CD4-positive, alpha-beta T cell (primary cell): ENCODE measurements at regions of chr22 and their contacts with region 1.

Region 1: GRCh38 chr22:50209893-50210292 is 9.1 kb downstream of the SELENOO start:
- DNase-seq: peak; percentile 59 to 88 (median 68)
- ATAC-seq: peak; percentile 82
- H3K4me3 ChIP-seq: no peak overlapping the region
- H3K4me3 Mint-ChIP-seq: peak overlapping the region; percentile 11
- H3K27ac ChIP-seq: no peak overlapping the region
- H3K27ac Mint-ChIP-seq: peak overlapping the region; percentile 78
- H3K4me1 ChIP-seq: peaks cover 20% of the 10 kb centered on the region
- H3K4me1 Mint-ChIP-seq: peaks cover 26% of the 10 kb centered on the region
- H3K27me3 ChIP-seq: no peaks in the 10 kb centered on the region
- H3K27me3 Mint-ChIP-seq: no peaks in the 10 kb centered on the region
- CTCF ChIP-seq: peak; percentile 70

Region 2: DNA sequence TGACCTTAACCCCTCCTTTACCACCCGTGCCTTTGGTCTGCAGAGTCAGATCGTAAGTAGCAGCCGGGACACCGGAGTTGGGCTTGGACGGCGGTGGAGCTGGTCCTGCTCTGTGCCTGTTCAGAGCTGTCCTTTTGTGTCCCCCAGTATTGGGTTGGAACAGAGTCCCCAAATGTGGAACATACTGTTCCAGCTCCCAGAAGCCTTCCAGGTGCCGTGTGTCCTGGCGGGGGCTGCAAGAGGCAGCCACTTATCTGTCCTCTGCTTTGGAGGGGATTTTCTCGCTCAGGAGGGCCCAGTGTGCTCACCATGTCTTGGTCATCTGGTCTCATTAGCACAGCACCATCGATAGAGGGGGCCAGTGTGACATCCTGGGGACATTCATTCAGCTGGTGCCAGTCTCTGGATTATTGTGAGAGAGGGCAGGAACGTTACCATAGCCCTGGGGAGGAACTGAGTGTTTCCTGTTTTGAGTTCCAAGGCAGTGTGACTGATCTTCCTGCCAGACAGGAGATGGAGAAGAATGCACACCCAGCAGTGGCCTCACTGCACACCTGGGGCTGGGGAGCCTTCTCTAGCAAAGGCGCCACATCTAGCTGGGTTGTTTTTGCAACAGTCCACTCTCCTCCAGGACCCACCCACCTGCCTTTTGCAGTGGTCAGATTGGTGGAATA is 279.0 kb before region 1 on chr22:
- CTCF ChIA-PET with region 1: no interaction called
- POLR2A ChIA-PET with region 1: no interaction called
- intact Hi-C with region 1: loop called in 1 of 2 experiments (anchors 5 kb)
- DNase-seq: peak in 12 of 14 experiments; percentile 22 to 83 (median 48)
- ATAC-seq: peak; percentile 37
- H3K4me3 ChIP-seq: no peak overlapping the region
- H3K4me3 Mint-ChIP-seq: peak overlapping the region; percentile 73
- H3K27ac ChIP-seq: peak overlapping the region in 1 of 2 donors; percentile 39
- H3K27ac Mint-ChIP-seq: peak overlapping the region; percentile 89
- H3K4me1 ChIP-seq: peaks cover 60% of the 10 kb centered on the region
- H3K4me1 Mint-ChIP-seq: peaks cover 42% of the 10 kb centered on the region
- H3K27me3 ChIP-seq: no peaks in the 10 kb centered on the region
- H3K27me3 Mint-ChIP-seq: no peaks in the 10 kb centered on the region
- CTCF ChIP-seq: peak; percentile 59

Region 3: GRCh38 chr22:49979587-49980264 is 230.2 kb before region 1 on chr22:
- CTCF ChIA-PET with region 1: no interaction called
- POLR2A ChIA-PET with region 1: no interaction called
- intact Hi-C with region 1: loop called in 1 of 2 experiments (anchors 5 kb)
- DNase-seq: peak in 4 of 14 experiments; percentile 33 to 68 (median 54)
- ATAC-seq: no peak
- H3K4me3 ChIP-seq: no peak overlapping the region
- H3K4me3 Mint-ChIP-seq: no peak overlapping the region
- H3K27ac ChIP-seq: no peak overlapping the region
- H3K27ac Mint-ChIP-seq: no peak overlapping the region
- H3K4me1 ChIP-seq: peaks cover 32% of the 10 kb centered on the region
- H3K4me1 Mint-ChIP-seq: peaks cover 29% of the 10 kb centered on the region
- H3K27me3 ChIP-seq: peaks cover 13 to 15% of the 10 kb centered on the region in 2 experiments
- H3K27me3 Mint-ChIP-seq: peaks cover 21% of the 10 kb centered on the region
- CTCF ChIP-seq: peak; percentile 44

Region 4: GRCh38 chr22:50169774-50170341 is 40.0 kb before region 1 on chr22:
- CTCF ChIA-PET with region 1: no interaction called
- POLR2A ChIA-PET with region 1: no interaction called
- intact Hi-C with region 1: loop called in 1 of 2 experiments (anchors 5 kb)
- DNase-seq: peak in 5 of 14 experiments; percentile 30 to 55 (median 43)
- ATAC-seq: peak; percentile 68
- H3K4me3 ChIP-seq: no peak overlapping the region
- H3K4me3 Mint-ChIP-seq: no peak overlapping the region
- H3K27ac ChIP-seq: no peak overlapping the region
- H3K27ac Mint-ChIP-seq: no peak overlapping the region
- H3K4me1 ChIP-seq: peaks cover 12% of the 10 kb centered on the region
- H3K4me1 Mint-ChIP-seq: peaks cover 10% of the 10 kb centered on the region
- H3K27me3 ChIP-seq: peaks cover 29 to 39% of the 10 kb centered on the region in 2 experiments
- H3K27me3 Mint-ChIP-seq: peaks cover 45% of the 10 kb centered on the region
- CTCF ChIP-seq: no peak

Region 5: GRCh38 chr22:50582562-50583293 is 372.8 kb after region 1 on chr22 and contains the start of gene CHKB:
- CTCF ChIA-PET with region 1: no interaction called
- POLR2A ChIA-PET with region 1: no interaction called
- intact Hi-C with region 1: no loop called
- DNase-seq: peak; percentile 95 to 99 (median 98)
- ATAC-seq: peak; percentile 92
- H3K4me3 ChIP-seq: peak within 1 kb of the TSS; percentile 63
- H3K4me3 Mint-ChIP-seq: peak within 1 kb of the TSS; percentile 100
- H3K27ac ChIP-seq: peak within 1 kb of the TSS; percentile 91 to 95
- H3K27ac Mint-ChIP-seq: peak within 1 kb of the TSS; percentile 98
- H3K4me1 ChIP-seq: peaks cover 31% of the 10 kb centered on the region
- H3K4me1 Mint-ChIP-seq: peaks cover 35% of the 10 kb centered on the region
- H3K27me3 ChIP-seq: no peaks in the 10 kb centered on the region
- H3K27me3 Mint-ChIP-seq: no peaks in the 10 kb centered on the region
- CTCF ChIP-seq: no peak
- total RNA-seq, gene CHKB: 152 to 156 TPM